ENCODE measurements at regions of chr4 and their contacts with region 1.

Region 1: DNA sequence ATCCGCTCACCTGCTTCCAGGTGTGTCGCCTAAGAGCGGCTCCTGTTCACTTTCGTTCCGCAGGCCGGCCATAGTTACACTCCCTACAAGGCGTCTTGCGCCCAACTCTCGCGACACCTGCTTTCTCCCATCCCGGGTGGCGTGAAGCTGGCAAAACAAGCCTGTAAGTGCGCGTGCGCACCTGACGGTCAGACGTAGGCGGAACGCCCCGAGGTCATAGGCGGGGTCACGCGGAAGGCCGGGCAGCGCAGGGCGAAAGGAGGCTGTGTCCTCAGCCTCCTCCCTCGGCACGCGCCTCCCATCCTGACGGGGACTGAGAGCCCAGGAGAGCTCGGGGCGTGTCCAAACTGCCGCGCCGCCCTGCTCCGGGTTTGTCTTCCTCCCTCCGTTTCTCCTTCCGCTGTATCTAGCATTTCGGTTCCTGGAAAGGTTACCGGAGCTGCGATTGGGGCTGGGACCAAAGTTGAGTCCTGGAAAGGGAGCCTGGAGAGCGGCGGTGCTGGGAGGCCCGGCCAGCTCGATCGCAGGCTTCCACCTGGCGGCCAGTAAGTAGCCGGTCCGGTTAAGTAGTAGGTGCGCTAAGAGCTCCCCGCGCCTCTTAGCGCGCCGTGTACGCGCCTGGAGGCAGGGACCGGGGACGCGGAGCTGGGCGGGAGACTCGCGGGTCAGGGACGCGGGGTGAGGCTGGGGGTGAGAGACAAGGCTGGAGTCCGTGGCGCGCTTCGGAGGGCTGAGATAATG is at the starts of genes ABHD18 and MFSD8:
- DNase-seq: peak; percentile 100
- H3K4me3 Mint-ChIP-seq: peak within 1 kb of the TSS; percentile 92
- H3K27ac Mint-ChIP-seq: peak within 1 kb of the TSS; percentile 95
- H3K4me1 Mint-ChIP-seq: peaks cover 43% of the 10 kb centered on the region
- H3K27me3 Mint-ChIP-seq: no peaks in the 10 kb centered on the region
- total RNA-seq, gene ABHD18: 23.6 to 26.8 TPM
- total RNA-seq, gene MFSD8: 19.4 to 21.4 TPM

Region 2: DNA sequence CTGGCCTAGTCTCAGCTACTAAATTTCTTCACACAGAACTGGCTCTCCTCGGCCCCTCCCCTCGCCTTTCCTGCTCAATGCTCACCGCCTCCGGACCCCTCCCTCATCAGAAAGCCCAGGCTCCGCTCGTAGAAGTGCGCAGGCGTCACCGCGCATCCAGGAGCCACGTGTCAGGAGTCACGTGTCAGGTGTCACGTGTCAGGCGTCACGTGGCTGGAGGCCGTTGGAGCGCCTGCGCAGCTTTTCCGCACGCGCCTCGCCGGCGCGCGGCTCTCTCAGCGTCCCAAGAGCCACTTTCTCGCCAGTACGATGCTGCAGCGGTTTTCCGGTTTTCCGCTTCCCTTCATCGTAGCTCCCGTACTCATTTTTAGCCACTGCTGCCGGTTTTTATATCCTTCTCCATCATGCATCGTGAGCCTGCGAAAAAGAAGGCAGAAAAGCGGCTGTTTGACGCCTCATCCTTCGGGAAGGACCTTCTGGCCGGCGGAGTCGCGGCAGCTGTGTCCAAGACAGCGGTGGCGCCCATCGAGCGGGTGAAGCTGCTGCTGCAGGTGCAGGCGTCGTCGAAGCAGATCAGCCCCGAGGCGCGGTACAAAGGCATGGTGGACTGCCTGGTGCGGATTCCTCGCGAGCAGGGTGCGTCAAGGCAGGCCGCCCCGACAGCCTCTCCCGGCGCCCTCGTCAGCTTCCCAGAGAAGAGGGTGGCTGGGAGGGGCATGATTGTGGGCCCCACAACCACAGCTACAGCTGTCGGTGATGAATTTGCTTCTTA is 234.9 kb before region 1 on chr4 and contains the start of gene SLC25A31:
- CTCF ChIA-PET with region 1: no interaction called
- POLR2A ChIA-PET with region 1: no interaction called
- DNase-seq: no peak
- H3K4me3 Mint-ChIP-seq: no peak within 1 kb of the TSS
- H3K27ac Mint-ChIP-seq: no peak within 1 kb of the TSS
- H3K4me1 Mint-ChIP-seq: no peaks in the 10 kb centered on the region
- H3K27me3 Mint-ChIP-seq: peaks cover 3% of the 10 kb centered on the region
- total RNA-seq, gene SLC25A31: not detected

Region 3: GRCh38 chr4:127810551-127810950 is 154.7 kb before region 1 on chr4:
- CTCF ChIA-PET with region 1: no interaction called
- POLR2A ChIA-PET with region 1: no interaction called
- DNase-seq: no peak
- H3K4me3 Mint-ChIP-seq: no peak overlapping the region
- H3K27ac Mint-ChIP-seq: no peak overlapping the region
- H3K4me1 Mint-ChIP-seq: no peaks in the 10 kb centered on the region
- H3K27me3 Mint-ChIP-seq: peaks cover 6% of the 10 kb centered on the region

Region 4: GRCh38 chr4:127880764-127881562 is 84.3 kb before region 1 on chr4 and contains the start of gene PLK4:
- CTCF ChIA-PET with region 1: interaction called, 10 read pairs
- POLR2A ChIA-PET with region 1: interaction called, 77 read pairs
- DNase-seq: peak; percentile 97
- H3K4me3 Mint-ChIP-seq: peak within 1 kb of the TSS; percentile 95
- H3K27ac Mint-ChIP-seq: peak within 1 kb of the TSS; percentile 93
- H3K4me1 Mint-ChIP-seq: peaks cover 58% of the 10 kb centered on the region
- H3K27me3 Mint-ChIP-seq: no peaks in the 10 kb centered on the region
- total RNA-seq, gene PLK4: 43.8 to 45.7 TPM

Region 5: DNA sequence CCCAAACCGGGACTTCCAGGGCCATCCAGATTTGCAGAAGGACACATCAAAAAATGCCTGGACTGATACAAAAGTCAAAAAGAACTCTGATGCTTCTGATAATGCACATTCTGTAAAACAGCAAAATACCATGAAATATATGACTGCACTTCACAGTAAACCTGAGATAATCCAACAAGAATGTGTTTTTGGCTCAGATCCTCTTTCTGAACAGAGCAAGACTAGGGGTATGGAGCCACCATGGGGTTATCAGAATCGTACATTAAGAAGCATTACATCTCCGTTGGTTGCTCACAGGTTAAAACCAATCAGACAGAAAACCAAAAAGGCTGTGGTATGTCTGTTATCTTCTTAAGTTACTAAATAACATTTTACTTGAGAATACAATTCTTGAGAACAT is 75.3 kb before region 1 on chr4:
- CTCF ChIA-PET with region 1: interaction called, 5 read pairs
- POLR2A ChIA-PET with region 1: interaction called, 25 read pairs
- DNase-seq: no peak
- H3K4me3 Mint-ChIP-seq: no peak overlapping the region
- H3K27ac Mint-ChIP-seq: no peak overlapping the region
- H3K4me1 Mint-ChIP-seq: peaks cover 29% of the 10 kb centered on the region
- H3K27me3 Mint-ChIP-seq: no peaks in the 10 kb centered on the region

Region 6: DNA sequence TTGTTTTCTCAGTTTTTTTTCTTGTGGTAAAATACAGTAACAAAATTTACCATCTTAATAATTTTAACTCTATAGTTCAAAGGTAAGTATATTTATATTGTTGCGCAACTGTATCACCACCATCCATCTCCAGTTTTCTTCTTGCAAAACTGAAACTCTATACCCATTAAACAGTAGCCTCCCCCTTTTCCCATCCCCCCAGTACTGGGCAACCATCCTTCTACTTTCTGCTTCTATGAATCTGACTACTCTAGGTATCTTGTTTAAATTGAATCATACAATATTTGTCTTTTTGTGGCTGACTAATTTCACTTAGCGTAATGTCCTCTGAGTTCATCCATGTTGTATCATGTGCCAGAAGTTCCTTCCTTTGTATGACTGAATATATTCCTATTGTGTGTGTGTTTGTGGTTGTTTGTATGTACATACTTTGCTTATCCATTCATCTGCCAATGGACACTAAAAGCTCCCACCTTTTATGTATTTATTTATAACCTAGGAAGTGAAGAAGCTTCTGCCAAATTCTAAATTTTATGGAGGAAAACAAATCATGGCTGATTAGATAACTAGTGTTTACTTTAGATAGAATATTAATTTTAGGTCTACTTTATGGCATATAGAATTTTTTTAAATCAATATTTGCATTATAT is 10.0 kb after region 1 on chr4:
- CTCF ChIA-PET with region 1: interaction called, 4 read pairs
- POLR2A ChIA-PET with region 1: interaction called, 15 read pairs
- DNase-seq: no peak
- H3K4me3 Mint-ChIP-seq: no peak overlapping the region
- H3K27ac Mint-ChIP-seq: no peak overlapping the region
- H3K4me1 Mint-ChIP-seq: peaks cover 5% of the 10 kb centered on the region
- H3K27me3 Mint-ChIP-seq: no peaks in the 10 kb centered on the region

Region 7: DNA sequence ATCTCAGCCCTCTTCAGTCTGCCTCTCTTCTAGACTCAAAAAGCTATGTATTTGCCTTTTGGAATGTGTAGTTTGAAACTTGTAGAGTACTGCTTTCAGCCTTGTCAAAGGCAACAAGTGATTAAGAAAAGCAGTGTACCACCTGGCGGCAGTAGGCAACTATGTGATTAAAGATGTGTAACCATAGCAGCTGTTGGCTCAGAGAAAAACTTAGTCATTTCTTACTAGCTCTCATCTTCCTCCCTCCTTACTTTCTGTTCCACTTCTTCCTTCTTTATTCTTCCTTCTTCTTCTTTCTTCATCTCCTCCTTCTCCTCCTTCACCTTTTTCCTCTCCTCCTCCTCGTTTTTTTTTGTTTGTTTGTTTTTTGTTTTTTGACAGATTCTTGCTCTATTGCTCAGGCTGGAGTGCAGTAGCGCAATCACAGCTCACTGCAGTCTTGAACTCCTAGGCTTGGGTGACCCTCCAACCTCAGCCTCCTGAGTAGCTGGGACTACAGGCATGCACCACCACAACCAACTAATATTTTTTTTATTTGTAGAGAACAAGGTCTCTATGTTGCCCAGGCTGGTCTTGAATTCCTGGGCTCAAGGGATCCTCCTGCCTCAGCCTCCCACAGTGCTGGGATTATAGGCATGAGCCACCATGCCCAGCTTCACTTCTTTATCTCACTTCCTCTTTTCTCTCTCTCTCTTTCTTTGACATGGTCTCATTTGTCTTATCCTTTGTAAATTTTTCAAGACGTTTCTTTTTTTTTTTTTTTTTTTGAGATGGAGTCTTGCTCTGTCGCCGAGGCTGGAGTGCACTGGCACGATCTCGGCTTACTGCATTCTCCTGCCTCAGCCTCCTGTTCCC is 32.5 kb after region 1 on chr4:
- CTCF ChIA-PET with region 1: interaction called, 9 read pairs
- POLR2A ChIA-PET with region 1: interaction called, 10 read pairs
- DNase-seq: peak; percentile 35
- H3K4me3 Mint-ChIP-seq: no peak overlapping the region
- H3K27ac Mint-ChIP-seq: no peak overlapping the region
- H3K4me1 Mint-ChIP-seq: peaks cover 28% of the 10 kb centered on the region
- H3K27me3 Mint-ChIP-seq: no peaks in the 10 kb centered on the region

Region 8: GRCh38 chr4:128060699-128061565 is 95.7 kb after region 1 on chr4 and contains the start of gene LARP1B:
- CTCF ChIA-PET with region 1: interaction called, 15 read pairs
- POLR2A ChIA-PET with region 1: interaction called, 73 read pairs
- DNase-seq: peak; percentile 93
- H3K4me3 Mint-ChIP-seq: peak within 1 kb of the TSS; percentile 83
- H3K27ac Mint-ChIP-seq: peak within 1 kb of the TSS; percentile 83
- H3K4me1 Mint-ChIP-seq: peaks cover 17% of the 10 kb centered on the region
- H3K27me3 Mint-ChIP-seq: peaks cover 5% of the 10 kb centered on the region
- total RNA-seq, gene LARP1B: 13.8 to 14.0 TPM

Region 9: DNA sequence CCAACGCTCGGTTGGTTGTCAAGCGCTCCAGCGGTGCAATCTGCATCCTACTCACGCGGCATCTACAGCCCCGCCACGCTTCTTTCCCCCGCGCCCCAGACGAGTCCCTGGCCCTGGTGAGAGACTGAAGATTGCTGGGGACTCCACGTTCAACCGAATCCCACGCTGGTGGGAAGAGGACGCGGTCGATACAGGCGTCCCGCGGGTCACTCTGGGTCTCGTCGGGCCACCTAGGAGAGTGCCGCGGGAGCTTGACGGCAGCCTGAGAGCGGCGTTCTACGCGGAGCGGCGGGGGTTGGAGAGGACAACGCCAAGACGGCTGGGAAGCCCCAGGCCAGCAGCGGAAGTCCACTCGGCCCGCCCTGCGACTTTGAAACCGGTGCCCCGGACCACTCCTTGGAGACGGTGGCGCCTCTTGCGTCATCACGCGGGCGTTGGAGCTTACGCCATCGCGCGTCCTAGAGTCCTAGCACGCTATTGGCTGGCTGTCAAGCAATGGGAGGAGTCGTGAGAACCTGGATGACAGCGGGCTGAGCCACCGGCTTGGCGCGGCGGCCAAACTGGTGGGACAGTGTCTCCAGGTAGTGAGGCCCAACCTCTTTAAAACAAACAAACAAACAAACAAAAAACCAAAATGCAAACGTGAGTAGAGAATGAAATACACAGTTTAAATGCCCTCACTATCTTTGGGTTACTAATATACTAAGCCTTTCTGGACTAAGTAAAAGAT is 1128.1 kb after region 1 on chr4 and contains the start of gene SCLT1:
- CTCF ChIA-PET with region 1: no interaction called
- POLR2A ChIA-PET with region 1: interaction called, 12 read pairs
- DNase-seq: peak; percentile 98
- H3K4me3 Mint-ChIP-seq: no peak within 1 kb of the TSS
- H3K27ac Mint-ChIP-seq: no peak within 1 kb of the TSS
- H3K4me1 Mint-ChIP-seq: peaks cover 52% of the 10 kb centered on the region
- H3K27me3 Mint-ChIP-seq: no peaks in the 10 kb centered on the region
- total RNA-seq, gene SCLT1: 36.4 to 37.8 TPM